Lower leg skin (tissue), 4 donors: ENCODE measurements at regions of chr11 and their contacts with region 1.

Region 1: DNA sequence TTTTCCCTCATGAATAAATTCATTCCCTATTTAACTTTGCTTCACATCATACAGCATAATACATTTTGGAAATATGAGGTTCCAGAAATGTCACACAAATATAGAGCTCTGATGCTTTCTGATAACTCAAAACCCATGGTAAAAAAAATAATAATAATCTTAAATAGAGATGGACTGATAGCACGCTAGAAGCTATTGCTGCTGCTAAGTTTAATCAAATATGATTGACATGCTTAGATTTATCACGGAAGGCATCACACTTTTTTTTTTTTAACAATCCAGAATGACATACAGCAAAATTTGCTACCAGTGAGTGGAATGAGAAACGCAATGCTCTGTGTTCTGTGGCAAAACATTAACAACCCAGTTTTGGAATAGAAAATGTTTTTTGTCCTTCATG is 2396.7 kb upstream of the RAG2 start:
- DNase-seq: no peak
- H3K4me3 ChIP-seq: no peak overlapping the region
- CTCF ChIP-seq: no peak
- POLR2A ChIP-seq: no peak

Region 2: DNA sequence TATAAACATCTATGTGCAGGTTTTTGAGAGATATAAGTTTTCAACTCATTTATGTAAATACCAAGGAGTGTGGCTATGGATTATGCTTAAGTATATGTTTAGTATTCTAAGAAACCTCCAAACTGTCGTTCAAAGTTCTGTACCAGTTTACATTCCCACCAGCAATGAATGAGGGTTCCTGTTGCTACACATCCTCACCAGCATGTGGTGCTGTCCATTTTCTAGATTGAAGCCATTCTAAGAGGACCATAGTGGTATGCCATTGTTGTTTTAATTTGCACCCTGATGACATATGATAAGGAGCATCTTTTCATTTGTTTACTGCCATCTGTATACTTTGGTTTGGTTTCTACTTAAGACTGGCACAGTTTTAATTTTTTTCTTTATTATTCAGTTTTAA is 366.9 kb after region 1 on chr11:
- intact Hi-C with region 1: no loop called
- DNase-seq: no peak
- H3K4me3 ChIP-seq: no peak overlapping the region
- CTCF ChIP-seq: no peak
- POLR2A ChIP-seq: no peak

Region 3: DNA sequence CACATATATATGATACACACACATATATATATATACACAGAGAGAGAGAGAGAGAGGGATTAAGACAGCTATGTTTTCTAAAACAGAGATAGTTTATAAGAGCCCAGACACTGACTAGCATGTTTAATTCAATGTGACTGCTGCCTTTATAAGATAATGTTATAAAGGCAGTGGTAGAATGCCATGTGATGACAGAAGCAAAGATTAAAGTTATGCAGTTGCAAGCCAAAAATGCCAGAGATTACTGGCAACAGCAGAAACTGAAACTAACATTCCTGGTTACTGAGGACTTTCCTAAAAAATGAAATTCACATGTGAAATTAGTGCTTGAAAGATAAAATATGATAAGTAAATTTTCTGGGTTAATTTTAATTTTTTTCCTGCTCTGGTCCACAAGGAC is 575.8 kb after region 1 on chr11:
- intact Hi-C with region 1: no loop called
- DNase-seq: no peak
- H3K4me3 ChIP-seq: no peak overlapping the region
- CTCF ChIP-seq: no peak
- POLR2A ChIP-seq: no peak

Region 4: GRCh38 chr11:39804271-39804670 is 809.6 kb after region 1 on chr11:
- intact Hi-C with region 1: loop called (anchors 5 kb)
- DNase-seq: no peak
- H3K4me3 ChIP-seq: no peak overlapping the region
- CTCF ChIP-seq: no peak
- POLR2A ChIP-seq: no peak